ENCODE measurements at regions of chr5 and their contacts with region 1.

Region 1: DNA sequence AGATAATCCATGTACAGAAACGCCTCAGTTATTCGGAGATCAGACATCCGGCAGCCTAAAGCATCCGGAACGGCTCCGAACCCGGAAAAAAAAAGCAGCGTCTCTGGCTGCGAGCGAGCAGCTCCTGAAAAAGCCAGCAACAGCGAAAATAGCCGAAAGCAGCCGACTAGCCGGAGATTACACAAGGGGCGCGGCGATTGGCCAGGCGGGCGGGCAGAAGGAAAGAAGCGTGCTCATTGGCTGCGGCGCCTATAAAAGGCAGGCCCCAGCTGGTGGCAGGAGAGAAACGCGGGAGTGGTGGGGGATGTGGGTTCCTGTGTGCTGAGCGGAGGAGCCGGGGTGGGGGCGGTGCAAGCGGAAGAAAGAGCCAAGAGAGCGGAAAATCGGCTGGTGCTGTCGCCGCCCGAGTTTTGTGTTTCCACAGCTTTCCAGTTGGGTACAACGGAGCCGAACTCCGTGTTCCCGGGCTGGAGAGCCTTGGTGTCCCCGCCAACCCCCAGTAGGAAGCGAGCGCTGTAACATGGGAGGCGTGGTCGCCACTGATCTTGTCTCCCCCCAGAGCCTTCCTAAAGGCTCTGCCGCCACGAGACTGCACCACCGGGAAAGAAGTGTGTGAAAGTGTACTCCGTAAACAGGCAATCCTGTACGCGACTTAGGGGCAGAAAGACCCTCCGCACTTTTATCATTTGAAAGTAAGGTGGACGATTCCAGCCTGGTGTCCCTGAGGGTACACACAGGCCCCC is at the start of gene ARL15:
- DNase-seq: peak; percentile 95 to 99 (median 98)
- ATAC-seq: peak; percentile 92
- H3K4me3 ChIP-seq: peak within 1 kb of the TSS; percentile 96 to 97
- H3K4me3 Mint-ChIP-seq: peak within 1 kb of the TSS; percentile 90
- H3K27ac ChIP-seq: peak within 1 kb of the TSS; percentile 78 to 79
- H3K27ac Mint-ChIP-seq: peak within 1 kb of the TSS; percentile 92
- H3K4me1 ChIP-seq: peaks cover 9% of the 10 kb centered on the region
- H3K4me1 Mint-ChIP-seq: peaks cover 34% of the 10 kb centered on the region
- H3K27me3 ChIP-seq: no peaks in the 10 kb centered on the region
- H3K27me3 Mint-ChIP-seq: peaks cover 6% of the 10 kb centered on the region
- CTCF ChIP-seq: no peak
- total RNA-seq, gene ARL15: 7.4 to 7.5 TPM

Region 2: DNA sequence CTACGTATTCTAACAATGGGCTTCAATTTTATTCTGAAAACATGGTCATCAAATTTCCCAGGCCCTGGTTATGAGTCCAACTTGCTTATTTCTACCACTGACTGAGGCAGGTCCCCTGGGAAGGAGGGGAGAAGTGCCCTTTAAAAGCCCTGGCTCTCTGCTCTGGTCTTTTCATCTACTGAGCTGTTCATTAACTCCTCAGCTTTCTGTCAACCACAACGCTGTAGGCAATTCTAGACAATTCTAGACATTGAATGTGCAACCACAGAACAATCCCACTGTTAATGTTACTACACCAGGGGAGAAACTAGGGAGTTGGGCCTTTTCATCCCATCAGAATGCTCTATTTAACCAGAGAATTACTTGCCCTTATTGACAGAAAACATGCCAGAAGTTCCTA is 1211.1 kb before region 1 on chr5:
- CTCF ChIA-PET with region 1: no interaction called
- POLR2A ChIA-PET with region 1: no interaction called
- intact Hi-C with region 1: no loop called
- DNase-seq: no peak
- ATAC-seq: no peak
- H3K4me3 ChIP-seq: no peak overlapping the region
- H3K4me3 Mint-ChIP-seq: no peak overlapping the region
- H3K27ac ChIP-seq: no peak overlapping the region
- H3K27ac Mint-ChIP-seq: no peak overlapping the region
- H3K4me1 ChIP-seq: no peaks in the 10 kb centered on the region
- H3K4me1 Mint-ChIP-seq: peaks cover 8% of the 10 kb centered on the region
- H3K27me3 ChIP-seq: no peaks in the 10 kb centered on the region
- H3K27me3 Mint-ChIP-seq: no peaks in the 10 kb centered on the region
- CTCF ChIP-seq: no peak

Region 3: GRCh38 chr5:53109443-53110127 is 1201.0 kb before region 1 on chr5 and contains the start of gene MOCS2:
- CTCF ChIA-PET with region 1: no interaction called
- POLR2A ChIA-PET with region 1: interaction called, 10 read pairs
- intact Hi-C with region 1: loop called (anchors 1 to 5 kb)
- DNase-seq: peak; percentile 73 to 95 (median 90)
- ATAC-seq: peak; percentile 97
- H3K4me3 ChIP-seq: peak within 1 kb of the TSS; percentile 59 to 85
- H3K4me3 Mint-ChIP-seq: peak within 1 kb of the TSS; percentile 96
- H3K27ac ChIP-seq: peak within 1 kb of the TSS; percentile 62 to 75
- H3K27ac Mint-ChIP-seq: peak within 1 kb of the TSS; percentile 93
- H3K4me1 ChIP-seq: peaks cover 34% of the 10 kb centered on the region
- H3K4me1 Mint-ChIP-seq: peaks cover 55% of the 10 kb centered on the region
- H3K27me3 ChIP-seq: no peaks in the 10 kb centered on the region
- H3K27me3 Mint-ChIP-seq: no peaks in the 10 kb centered on the region
- CTCF ChIP-seq: no peak
- total RNA-seq, gene MOCS2: 16.5 to 18.2 TPM

Region 4: GRCh38 chr5:53323943-53324642 is 986.5 kb before region 1 on chr5:
- CTCF ChIA-PET with region 1: no interaction called
- POLR2A ChIA-PET with region 1: no interaction called
- intact Hi-C with region 1: no loop called
- DNase-seq: no peak
- ATAC-seq: no peak
- H3K4me3 ChIP-seq: no peak overlapping the region
- H3K4me3 Mint-ChIP-seq: no peak overlapping the region
- H3K27ac ChIP-seq: no peak overlapping the region
- H3K27ac Mint-ChIP-seq: no peak overlapping the region
- H3K4me1 ChIP-seq: no peaks in the 10 kb centered on the region
- H3K4me1 Mint-ChIP-seq: no peaks in the 10 kb centered on the region
- H3K27me3 ChIP-seq: no peaks in the 10 kb centered on the region
- H3K27me3 Mint-ChIP-seq: no peaks in the 10 kb centered on the region
- CTCF ChIP-seq: no peak

Region 5: GRCh38 chr5:53560506-53561191 is 750.0 kb before region 1 on chr5 and contains the start of gene NDUFS4:
- CTCF ChIA-PET with region 1: no interaction called
- POLR2A ChIA-PET with region 1: no interaction called
- intact Hi-C with region 1: loop called (anchors 2 to 5 kb)
- DNase-seq: peak; percentile 54 to 88 (median 78)
- ATAC-seq: peak; percentile 86
- H3K4me3 ChIP-seq: peak within 1 kb of the TSS; percentile 91 to 96
- H3K4me3 Mint-ChIP-seq: peak within 1 kb of the TSS; percentile 100
- H3K27ac ChIP-seq: peak within 1 kb of the TSS; percentile 81 to 84
- H3K27ac Mint-ChIP-seq: peak within 1 kb of the TSS; percentile 99
- H3K4me1 ChIP-seq: peaks cover 15% of the 10 kb centered on the region
- H3K4me1 Mint-ChIP-seq: peaks cover 47% of the 10 kb centered on the region
- H3K27me3 ChIP-seq: no peaks in the 10 kb centered on the region
- H3K27me3 Mint-ChIP-seq: peaks cover 14% of the 10 kb centered on the region
- CTCF ChIP-seq: no peak
- total RNA-seq, gene NDUFS4: 22.8 to 24.3 TPM

Region 6: DNA sequence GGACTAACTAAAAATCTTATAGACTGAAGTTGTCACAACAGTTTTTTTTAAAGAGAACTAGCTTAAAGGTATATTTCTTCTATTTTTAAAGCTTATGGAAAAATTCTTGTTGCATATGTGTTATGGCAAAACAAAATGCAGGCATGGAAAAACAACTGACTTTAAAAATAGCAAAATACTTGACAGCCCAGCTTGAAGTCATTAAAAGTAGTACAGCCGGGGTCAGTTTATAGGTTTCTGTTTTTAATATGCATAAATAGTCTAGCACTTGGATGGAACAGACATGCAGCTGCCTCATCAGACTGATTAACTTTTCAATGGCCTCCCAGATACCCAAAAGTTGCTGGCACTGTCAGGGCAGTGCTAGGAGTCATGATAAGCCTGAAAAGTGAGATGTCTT is 22.1 kb after region 1 on chr5:
- CTCF ChIA-PET with region 1: no interaction called
- POLR2A ChIA-PET with region 1: no interaction called
- intact Hi-C with region 1: no loop called
- DNase-seq: no peak
- ATAC-seq: no peak
- H3K4me3 ChIP-seq: no peak overlapping the region
- H3K4me3 Mint-ChIP-seq: no peak overlapping the region
- H3K27ac ChIP-seq: no peak overlapping the region
- H3K27ac Mint-ChIP-seq: no peak overlapping the region
- H3K4me1 ChIP-seq: no peaks in the 10 kb centered on the region
- H3K4me1 Mint-ChIP-seq: no peaks in the 10 kb centered on the region
- H3K27me3 ChIP-seq: peaks cover 0 to 3% of the 10 kb centered on the region in 2 experiments
- H3K27me3 Mint-ChIP-seq: peaks cover 20% of the 10 kb centered on the region
- CTCF ChIP-seq: no peak

Region 7: DNA sequence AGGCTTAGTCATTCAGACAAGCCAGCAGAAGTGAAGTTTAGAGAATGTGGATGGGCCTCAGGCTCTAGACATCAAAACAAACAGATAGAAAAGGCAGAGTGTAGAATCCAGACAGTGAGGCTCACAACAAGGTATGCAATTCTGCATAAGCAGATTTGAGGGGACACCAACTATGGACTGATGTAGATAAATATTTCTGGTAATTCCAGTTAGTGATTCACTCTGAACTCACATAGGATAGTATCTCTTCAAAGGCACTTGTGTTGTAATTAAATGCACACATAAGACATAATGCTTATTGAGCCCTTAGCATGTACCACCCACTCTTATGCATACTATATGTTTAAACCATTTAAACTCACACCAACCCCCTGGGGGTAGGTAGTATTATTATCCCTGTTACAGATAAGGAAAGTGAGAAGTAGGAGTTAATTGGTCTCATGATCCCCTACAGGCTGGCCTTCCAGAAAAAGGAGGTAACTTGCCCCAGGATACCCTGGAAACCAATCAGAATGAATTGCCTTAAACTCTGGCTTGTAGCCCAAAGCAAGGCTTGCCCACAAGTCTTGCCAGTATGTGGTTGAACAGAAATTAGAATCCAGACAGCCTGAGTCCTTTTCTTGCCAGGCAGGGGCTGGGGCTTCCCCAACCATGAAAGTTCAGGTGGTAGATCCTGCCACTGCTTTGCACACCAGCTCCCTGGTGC is 105.4 kb after region 1 on chr5:
- CTCF ChIA-PET with region 1: interaction called, 11 read pairs
- POLR2A ChIA-PET with region 1: interaction called, 3 read pairs
- intact Hi-C with region 1: loop called (anchors 1 to 2 kb)
- DNase-seq: no peak
- ATAC-seq: no peak
- H3K4me3 ChIP-seq: no peak overlapping the region
- H3K4me3 Mint-ChIP-seq: no peak overlapping the region
- H3K27ac ChIP-seq: no peak overlapping the region
- H3K27ac Mint-ChIP-seq: no peak overlapping the region
- H3K4me1 ChIP-seq: no peaks in the 10 kb centered on the region
- H3K4me1 Mint-ChIP-seq: no peaks in the 10 kb centered on the region
- H3K27me3 ChIP-seq: no peaks in the 10 kb centered on the region
- H3K27me3 Mint-ChIP-seq: no peaks in the 10 kb centered on the region
- CTCF ChIP-seq: no peak

Region 8: DNA sequence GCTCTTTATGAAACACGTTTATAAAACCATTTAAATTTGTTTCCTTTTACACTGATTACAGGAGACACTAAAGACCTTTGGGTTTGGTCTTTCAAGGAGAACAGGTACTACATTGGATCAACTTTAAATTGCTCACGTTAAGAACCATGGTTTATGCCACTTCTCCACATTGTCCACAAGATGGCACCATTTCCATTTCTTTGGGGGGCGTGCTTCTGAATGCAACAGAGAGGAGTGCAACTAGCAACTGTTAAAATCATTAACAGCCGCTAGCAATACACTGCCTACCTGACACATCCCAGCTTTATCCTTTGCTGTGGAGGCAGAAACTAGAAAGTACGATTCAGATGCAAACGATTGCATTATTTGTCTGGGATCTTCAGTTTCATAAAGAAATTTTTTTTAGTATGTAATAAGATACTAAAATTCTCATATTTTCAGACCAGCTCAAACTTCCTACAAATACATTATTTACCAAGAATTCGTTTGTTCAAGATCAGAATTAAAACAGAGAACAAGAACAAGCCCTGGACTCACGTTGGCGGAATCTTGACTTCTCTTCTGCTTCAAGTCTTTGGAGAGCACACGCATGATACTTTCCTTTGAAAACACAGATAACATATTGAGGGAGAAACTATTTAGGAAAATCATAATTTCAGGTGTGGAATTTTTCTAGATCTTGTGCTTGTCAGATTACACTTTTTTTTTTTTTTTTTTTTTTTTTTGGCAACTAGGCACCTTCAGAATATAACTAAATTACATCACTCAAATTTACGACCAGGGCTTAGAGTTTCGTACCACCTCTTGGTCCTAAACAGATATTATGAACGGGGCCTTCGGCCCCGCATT is 861.7 kb after region 1 on chr5:
- CTCF ChIA-PET with region 1: no interaction called
- POLR2A ChIA-PET with region 1: no interaction called
- intact Hi-C with region 1: loop called (anchors 5 to 10 kb)
- DNase-seq: peak; percentile 30 to 90 (median 56)
- ATAC-seq: peak; percentile 71
- H3K4me3 ChIP-seq: peak overlapping the region; percentile 57 to 59
- H3K4me3 Mint-ChIP-seq: peak overlapping the region; percentile 85
- H3K27ac ChIP-seq: no peak overlapping the region
- H3K27ac Mint-ChIP-seq: no peak overlapping the region
- H3K4me1 ChIP-seq: peaks cover 30% of the 10 kb centered on the region
- H3K4me1 Mint-ChIP-seq: peaks cover 32% of the 10 kb centered on the region
- H3K27me3 ChIP-seq: peaks cover 28 to 30% of the 10 kb centered on the region in 2 experiments
- H3K27me3 Mint-ChIP-seq: peaks cover 63% of the 10 kb centered on the region
- CTCF ChIP-seq: peak; percentile 70

Region 9: GRCh38 chr5:55534436-55535198 is 1224.0 kb after region 1 on chr5 and contains the start of gene PLPP1:
- CTCF ChIA-PET with region 1: no interaction called
- POLR2A ChIA-PET with region 1: no interaction called
- intact Hi-C with region 1: loop called (anchors 5 to 10 kb)
- DNase-seq: peak; percentile 57 to 93 (median 79)
- ATAC-seq: peak; percentile 79
- H3K4me3 ChIP-seq: peak within 1 kb of the TSS; percentile 81 to 97
- H3K4me3 Mint-ChIP-seq: peak within 1 kb of the TSS; percentile 93
- H3K27ac ChIP-seq: peak within 1 kb of the TSS; percentile 81 to 87
- H3K27ac Mint-ChIP-seq: peak within 1 kb of the TSS; percentile 92
- H3K4me1 ChIP-seq: peaks cover 25% of the 10 kb centered on the region
- H3K4me1 Mint-ChIP-seq: peaks cover 37% of the 10 kb centered on the region
- H3K27me3 ChIP-seq: no peaks in the 10 kb centered on the region
- H3K27me3 Mint-ChIP-seq: no peaks in the 10 kb centered on the region
- CTCF ChIP-seq: no peak
- total RNA-seq, gene PLPP1: 5.8 to 5.9 TPM

Region 10: GRCh38 chr5:56019306-56020272 is 1709.0 kb after region 1 on chr5:
- CTCF ChIA-PET with region 1: no interaction called
- POLR2A ChIA-PET with region 1: no interaction called
- intact Hi-C with region 1: loop called in 1 of 2 experiments (anchors 5 kb)
- DNase-seq: peak in 1 of 9 experiments; percentile 20
- ATAC-seq: no peak
- H3K4me3 ChIP-seq: no peak overlapping the region
- H3K4me3 Mint-ChIP-seq: no peak overlapping the region
- H3K27ac ChIP-seq: no peak overlapping the region
- H3K27ac Mint-ChIP-seq: peak overlapping the region; percentile 34
- H3K4me1 ChIP-seq: peaks cover 19% of the 10 kb centered on the region
- H3K4me1 Mint-ChIP-seq: peaks cover 13% of the 10 kb centered on the region
- H3K27me3 ChIP-seq: no peaks in the 10 kb centered on the region
- H3K27me3 Mint-ChIP-seq: no peaks in the 10 kb centered on the region
- CTCF ChIP-seq: no peak